IMR-90 (cell line): ENCODE measurements at regions of chr6 and their contacts with region 1.

Region 1: GRCh38 chr6:73388800-73389512 is 5.7 kb upstream of the DDX43 start:
- DNase-seq: peak; percentile 51
- ATAC-seq: peak; percentile 92
- H3K4me3 ChIP-seq: peak overlapping the region; percentile 45
- H3K27ac ChIP-seq: peak overlapping the region; percentile 30; the same call in 1 of the 2 replicates
- H3K4me1 ChIP-seq: no peaks in the 10 kb centered on the region
- H3K27me3 ChIP-seq: no peaks in the 10 kb centered on the region
- CTCF ChIP-seq: peak; percentile 69
- POLR2A ChIP-seq: no peak
- RAD21 ChIP-seq: peak; percentile 67

Region 2: DNA sequence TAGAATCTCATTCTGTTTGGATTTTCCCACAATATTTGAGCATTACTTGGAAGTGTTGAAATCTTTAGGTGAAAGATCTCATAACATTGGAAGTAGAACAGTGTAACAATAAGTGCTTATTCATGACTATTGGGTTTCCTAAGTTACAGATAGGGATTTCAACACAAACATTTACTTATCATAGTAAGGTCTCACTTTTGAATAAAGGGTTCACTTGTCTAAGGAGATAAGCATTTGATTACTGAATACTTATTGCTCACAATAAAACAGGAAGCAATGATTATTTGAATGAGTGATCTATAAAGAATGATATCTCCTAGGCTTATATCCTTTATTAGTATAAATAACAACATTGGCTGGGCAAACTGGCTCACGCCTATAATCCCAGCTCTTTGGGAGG is 20.4 kb after region 1 on chr6:
- CTCF ChIA-PET with region 1: interaction called, 4 read pairs
- POLR2A ChIA-PET with region 1: no interaction called
- dilution Hi-C with region 1: no loop called
- in situ Hi-C with region 1: no loop called
- intact Hi-C with region 1: loop called (anchors 1 kb)
- DNase-seq: peak; percentile 23
- ATAC-seq: no peak; the same call in 1 of the 2 replicates
- H3K4me3 ChIP-seq: no peak overlapping the region
- H3K27ac ChIP-seq: no peak overlapping the region
- H3K4me1 ChIP-seq: no peaks in the 10 kb centered on the region
- H3K27me3 ChIP-seq: no peaks in the 10 kb centered on the region
- CTCF ChIP-seq: no peak
- POLR2A ChIP-seq: no peak
- RAD21 ChIP-seq: no peak

Region 3: GRCh38 chr6:73451223-73452107 is 62.5 kb after region 1 on chr6:
- CTCF ChIA-PET with region 1: no interaction called
- POLR2A ChIA-PET with region 1: no interaction called
- dilution Hi-C with region 1: no loop called
- in situ Hi-C with region 1: no loop called
- intact Hi-C with region 1: loop called (anchors 5 kb)
- DNase-seq: peak; percentile 43
- ATAC-seq: peak; percentile 74
- H3K4me3 ChIP-seq: peak overlapping the region; percentile 54
- H3K27ac ChIP-seq: peak overlapping the region; percentile 56
- H3K4me1 ChIP-seq: no peaks in the 10 kb centered on the region
- H3K27me3 ChIP-seq: no peaks in the 10 kb centered on the region
- CTCF ChIP-seq: no peak
- POLR2A ChIP-seq: no peak
- RAD21 ChIP-seq: no peak

Region 4: DNA sequence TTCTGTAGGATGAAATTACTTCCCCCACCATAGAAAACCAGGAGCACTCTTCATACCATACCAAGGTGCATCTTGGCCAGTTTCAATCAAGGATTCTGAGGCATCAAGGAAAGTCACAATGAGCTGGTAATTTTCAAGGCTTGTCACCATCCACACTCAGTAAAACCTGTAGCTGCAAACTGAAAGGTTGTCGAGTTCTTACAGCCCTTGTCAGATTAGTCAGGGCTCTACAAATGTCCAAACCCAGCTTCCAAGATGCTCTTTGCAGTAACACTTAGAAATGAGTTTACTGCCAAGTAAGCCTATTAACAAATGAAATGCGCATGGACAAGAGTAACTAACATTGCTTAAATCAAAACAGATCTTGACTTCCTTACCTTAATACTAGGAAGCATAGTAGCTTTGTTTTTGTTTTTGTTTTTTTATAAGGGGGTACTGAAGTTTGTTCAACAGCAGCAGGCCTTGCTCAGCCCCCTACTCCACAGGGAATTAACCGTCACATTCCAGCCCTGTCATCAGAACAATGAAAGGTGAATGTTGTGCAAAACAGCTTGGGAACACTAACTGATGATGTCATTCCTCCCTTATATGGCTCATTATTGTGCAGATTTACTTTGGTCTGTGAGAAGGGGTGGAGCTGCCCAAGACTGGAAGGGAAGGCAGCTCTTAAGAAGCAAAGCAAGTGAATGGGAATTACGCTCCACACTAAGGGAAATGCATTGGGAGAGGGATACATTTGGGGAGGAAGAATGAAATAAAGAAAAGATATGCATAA is 1945.5 kb after region 1 on chr6:
- CTCF ChIA-PET with region 1: no interaction called
- POLR2A ChIA-PET with region 1: no interaction called
- dilution Hi-C with region 1: no loop called
- in situ Hi-C with region 1: no loop called
- intact Hi-C with region 1: no loop called
- DNase-seq: peak; percentile 72
- ATAC-seq: peak; percentile 85
- H3K4me3 ChIP-seq: no peak overlapping the region
- H3K27ac ChIP-seq: no peak overlapping the region
- H3K4me1 ChIP-seq: peaks cover 2% of the 10 kb centered on the region; the same call in 1 of the 2 replicates
- H3K27me3 ChIP-seq: no peaks in the 10 kb centered on the region
- CTCF ChIP-seq: no peak
- POLR2A ChIP-seq: no peak
- RAD21 ChIP-seq: no peak